Endothelial cell of umbilical vein (primary cell): ENCODE measurements at regions of chr2 and their contacts with region 1.

Region 1: DNA sequence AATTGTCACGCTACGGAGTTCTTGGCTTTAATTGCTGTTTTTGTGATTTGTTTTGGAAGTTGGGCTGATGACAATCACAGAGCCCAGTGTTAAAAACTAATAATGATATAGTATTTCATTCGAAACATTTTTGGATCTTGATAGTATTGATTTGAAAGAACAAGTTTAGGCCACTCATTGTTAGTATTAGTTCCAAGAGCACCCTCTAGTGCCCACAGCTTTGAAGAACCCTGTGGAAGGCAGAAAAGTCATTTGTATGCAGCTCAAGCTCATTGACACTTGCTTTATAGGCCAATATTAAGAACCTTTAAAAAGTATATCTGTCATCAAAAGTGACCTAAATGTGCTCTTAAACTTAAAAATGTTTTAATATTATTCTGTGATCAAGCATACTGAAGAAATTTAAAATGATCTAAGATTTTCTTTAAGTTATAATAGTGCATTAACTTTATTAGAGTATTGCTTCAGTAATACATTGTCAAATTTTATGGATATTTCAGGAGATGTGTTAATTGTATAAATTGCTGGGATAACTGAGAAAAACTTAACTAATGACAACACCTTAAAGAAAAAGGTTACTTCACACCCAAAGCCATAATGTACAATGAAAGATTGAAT is 191.0 kb downstream of the GRB14 start:
- DNase-seq: peak; percentile 60
- H3K4me3 ChIP-seq: no peak overlapping the region
- H3K27ac ChIP-seq: no peak overlapping the region
- H3K4me1 ChIP-seq: no peaks in the 10 kb centered on the region
- H3K27me3 ChIP-seq: no peaks in the 10 kb centered on the region
- CTCF ChIP-seq: peak; percentile 48 to 57
- POLR2A ChIP-seq: no peak

Region 2: DNA sequence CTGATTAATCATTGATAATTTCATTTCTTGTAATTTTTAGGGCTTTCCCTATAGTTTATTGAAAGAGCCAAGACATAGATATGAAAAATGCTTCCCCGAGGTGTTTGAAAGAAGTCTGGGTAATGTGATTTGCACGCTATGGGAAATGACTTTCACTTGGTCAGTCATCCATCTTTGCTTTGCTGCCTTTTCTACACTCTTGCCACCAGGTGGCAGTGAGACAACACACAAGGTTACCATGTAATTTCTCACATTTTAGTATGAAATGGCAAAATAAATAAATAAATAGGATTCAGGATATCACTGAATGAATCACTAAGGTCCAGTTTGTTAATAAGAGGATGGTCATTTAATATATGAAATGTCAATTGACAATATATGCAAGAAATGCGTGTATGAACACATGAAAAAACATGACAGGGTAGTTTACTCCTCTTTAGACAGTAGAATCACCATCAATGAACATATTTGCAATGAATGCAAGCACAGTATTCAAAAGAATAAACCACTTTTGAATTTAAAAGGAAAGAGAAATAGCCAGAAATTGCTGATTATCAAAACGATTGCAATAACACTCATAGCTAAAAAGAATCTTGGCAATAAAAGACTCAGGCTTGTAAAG is 1539.5 kb before region 1 on chr2:
- CTCF ChIA-PET with region 1: interaction called, 3 read pairs
- POLR2A ChIA-PET with region 1: no interaction called
- dilution Hi-C with region 1: no loop called
- intact Hi-C with region 1: loop called (anchors 5 kb)
- DNase-seq: peak; percentile 65
- H3K4me3 ChIP-seq: no peak overlapping the region
- H3K27ac ChIP-seq: no peak overlapping the region
- H3K4me1 ChIP-seq: no peaks in the 10 kb centered on the region
- H3K27me3 ChIP-seq: no peaks in the 10 kb centered on the region
- CTCF ChIP-seq: peak; percentile 68 to 77
- POLR2A ChIP-seq: no peak

Region 3: DNA sequence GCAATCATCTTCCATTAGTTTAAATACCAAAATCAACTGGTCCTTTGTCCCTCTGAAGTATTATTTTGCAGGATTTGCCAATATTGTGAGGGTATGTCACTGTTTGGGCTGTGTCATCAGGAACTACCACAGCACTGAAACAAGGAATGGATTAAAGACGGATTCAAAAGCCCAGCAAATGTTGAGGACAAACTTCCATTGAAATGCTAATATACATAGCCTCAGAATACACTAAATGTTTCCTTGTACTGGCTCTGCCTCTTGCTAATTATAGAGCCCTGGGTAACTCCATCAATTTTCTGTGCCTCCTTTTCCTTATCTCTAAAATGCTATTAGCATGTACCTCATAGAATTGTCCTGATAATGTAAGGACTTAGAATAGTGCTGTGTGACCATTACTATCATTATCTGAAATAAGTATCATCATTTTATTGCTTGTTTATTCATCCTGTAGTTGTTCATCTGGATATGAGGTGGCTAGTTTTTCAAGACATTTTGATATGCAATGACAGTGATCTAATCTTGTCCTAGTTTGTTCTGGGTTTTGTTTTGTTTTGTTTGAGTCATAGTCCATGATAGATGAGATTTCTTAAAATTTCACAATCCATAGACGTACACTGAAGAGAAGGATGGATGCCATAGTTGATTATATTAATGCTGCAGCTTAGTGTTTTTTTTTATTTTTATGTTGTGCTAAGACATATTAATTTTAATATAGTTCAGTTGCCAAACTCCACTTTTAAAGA is 1258.3 kb before region 1 on chr2:
- CTCF ChIA-PET with region 1: interaction called, 20 read pairs
- POLR2A ChIA-PET with region 1: no interaction called
- dilution Hi-C with region 1: no loop called
- intact Hi-C with region 1: loop called (anchors 1 kb)
- DNase-seq: no peak
- H3K4me3 ChIP-seq: no peak overlapping the region
- H3K27ac ChIP-seq: no peak overlapping the region
- H3K4me1 ChIP-seq: no peaks in the 10 kb centered on the region
- H3K27me3 ChIP-seq: no peaks in the 10 kb centered on the region
- CTCF ChIP-seq: no peak
- POLR2A ChIP-seq: no peak

Region 4: GRCh38 chr2:164061129-164061746 is 369.0 kb before region 1 on chr2:
- CTCF ChIA-PET with region 1: interaction called, 10 read pairs
- POLR2A ChIA-PET with region 1: no interaction called
- dilution Hi-C with region 1: no loop called
- intact Hi-C with region 1: no loop called
- DNase-seq: peak; percentile 61
- H3K4me3 ChIP-seq: no peak overlapping the region
- H3K27ac ChIP-seq: no peak overlapping the region
- H3K4me1 ChIP-seq: no peaks in the 10 kb centered on the region
- H3K27me3 ChIP-seq: no peaks in the 10 kb centered on the region
- CTCF ChIP-seq: peak; percentile 53 to 58
- POLR2A ChIP-seq: no peak

Region 5: DNA sequence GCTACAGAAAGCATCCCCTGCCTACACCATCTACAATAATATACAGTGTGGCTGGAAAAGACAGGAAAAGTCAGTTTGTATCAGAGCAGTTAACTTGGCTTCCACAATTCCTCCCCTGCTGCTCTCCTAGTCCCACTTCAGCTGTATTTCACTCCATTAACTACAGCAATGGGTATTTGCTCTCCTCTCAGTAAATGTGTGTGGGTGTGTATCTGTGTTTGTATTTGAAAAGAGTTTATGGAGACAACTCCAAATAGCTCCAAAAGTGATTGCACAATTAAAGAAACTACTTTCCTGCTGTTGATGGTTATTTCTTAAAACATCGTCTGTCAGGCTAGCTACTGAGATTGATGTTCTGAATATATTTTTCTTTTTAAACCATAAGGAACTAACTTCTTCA is 360.7 kb before region 1 on chr2:
- CTCF ChIA-PET with region 1: interaction called, 4 read pairs
- POLR2A ChIA-PET with region 1: no interaction called
- dilution Hi-C with region 1: no loop called
- intact Hi-C with region 1: loop called (anchors 1 kb)
- DNase-seq: no peak
- H3K4me3 ChIP-seq: no peak overlapping the region
- H3K27ac ChIP-seq: no peak overlapping the region
- H3K4me1 ChIP-seq: no peaks in the 10 kb centered on the region
- H3K27me3 ChIP-seq: peaks cover 4 to 6% of the 10 kb centered on the region in 2 experiments
- CTCF ChIP-seq: no peak
- POLR2A ChIP-seq: no peak

Region 6: GRCh38 chr2:164538240-164538866 is 108.1 kb after region 1 on chr2:
- CTCF ChIA-PET with region 1: interaction called, 19 read pairs
- POLR2A ChIA-PET with region 1: no interaction called
- dilution Hi-C with region 1: no loop called
- intact Hi-C with region 1: no loop called
- DNase-seq: peak; percentile 56
- H3K4me3 ChIP-seq: no peak overlapping the region
- H3K27ac ChIP-seq: no peak overlapping the region
- H3K4me1 ChIP-seq: peaks cover 5% of the 10 kb centered on the region
- H3K27me3 ChIP-seq: no peaks in the 10 kb centered on the region
- CTCF ChIP-seq: peak; percentile 58 to 68
- POLR2A ChIP-seq: no peak